HEK293 (cell line): ENCODE measurements at regions of chr12 and their contacts with region 1.

Region 1: DNA sequence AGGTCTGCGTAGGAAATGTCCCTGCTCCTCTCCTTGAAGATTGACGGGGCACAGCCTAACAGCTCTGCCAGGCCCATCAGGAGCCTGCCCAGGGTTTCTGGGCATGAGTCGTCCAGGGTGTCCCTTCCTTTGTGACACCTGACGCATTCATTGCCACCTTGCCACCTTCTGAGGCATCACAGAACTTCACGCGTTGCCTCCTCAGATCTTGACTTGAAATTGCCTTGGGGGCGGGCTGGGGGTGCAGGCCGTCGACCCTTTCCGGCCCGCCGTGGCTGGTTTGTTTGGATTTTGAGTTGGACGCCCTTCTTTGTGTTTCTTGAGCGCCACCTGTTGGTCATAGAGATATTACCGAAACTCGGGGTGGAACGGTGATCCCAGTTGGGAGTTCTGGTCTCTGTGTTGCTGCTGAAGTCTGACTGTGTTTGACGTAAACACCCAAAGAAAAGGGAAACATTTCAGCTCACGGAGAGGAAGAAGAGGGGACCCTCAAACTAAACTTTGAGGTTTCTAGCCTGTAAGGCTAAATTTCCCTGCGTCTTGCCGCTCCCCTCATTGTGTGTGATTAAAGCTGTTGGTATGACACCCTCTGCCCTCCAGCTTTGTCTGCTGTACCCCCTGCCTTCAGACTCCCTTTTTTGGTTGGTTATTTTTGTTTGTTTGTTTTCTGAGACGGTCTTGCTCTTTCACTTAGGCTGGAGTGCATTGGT is 44.6 kb downstream of the MLXIP start:
- H3K4me3 ChIP-seq: no peak overlapping the region
- H3K27ac ChIP-seq: no peak overlapping the region
- H3K4me1 ChIP-seq: no peaks in the 10 kb centered on the region
- CTCF ChIP-seq: peak; percentile 73

Region 2: DNA sequence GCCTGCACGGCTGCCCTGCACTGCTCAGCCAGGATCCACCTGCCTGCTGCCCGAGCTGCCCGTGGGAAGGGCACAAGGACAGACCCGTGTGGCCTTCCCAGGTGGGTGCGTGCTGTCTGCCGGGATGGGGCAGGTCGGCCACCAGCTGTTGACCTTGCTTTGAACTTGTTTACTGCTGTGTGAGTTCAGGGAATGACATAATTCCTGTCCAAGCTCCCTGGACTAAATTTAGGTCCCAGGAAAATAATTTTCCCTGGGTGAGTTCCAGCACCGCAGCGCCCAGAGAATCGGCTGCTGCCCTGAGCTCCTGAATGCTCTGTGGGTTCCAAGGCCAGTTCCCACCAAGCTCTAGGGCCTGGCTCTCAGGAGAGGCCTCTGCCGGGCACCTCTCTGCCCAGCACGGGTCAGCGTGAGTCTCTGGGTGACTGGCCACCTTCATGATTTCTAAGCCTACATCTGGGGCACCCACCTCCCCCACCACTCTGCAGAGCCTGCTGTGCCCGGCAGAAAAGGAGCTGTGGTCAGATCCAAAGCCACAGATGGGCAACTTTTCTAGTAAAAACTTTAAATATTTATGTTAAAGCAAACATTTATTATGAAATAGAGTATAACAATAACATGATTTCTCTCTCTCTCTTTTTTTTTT is 71.9 kb before region 1 on chr12:
- CTCF ChIA-PET with region 1: interaction called, 110 read pairs
- POLR2A ChIA-PET with region 1: interaction called, 5 read pairs
- H3K4me3 ChIP-seq: no peak overlapping the region
- H3K27ac ChIP-seq: no peak overlapping the region
- H3K4me1 ChIP-seq: no peaks in the 10 kb centered on the region; the same call in 1 of the 2 replicates
- CTCF ChIP-seq: no peak

Region 3: DNA sequence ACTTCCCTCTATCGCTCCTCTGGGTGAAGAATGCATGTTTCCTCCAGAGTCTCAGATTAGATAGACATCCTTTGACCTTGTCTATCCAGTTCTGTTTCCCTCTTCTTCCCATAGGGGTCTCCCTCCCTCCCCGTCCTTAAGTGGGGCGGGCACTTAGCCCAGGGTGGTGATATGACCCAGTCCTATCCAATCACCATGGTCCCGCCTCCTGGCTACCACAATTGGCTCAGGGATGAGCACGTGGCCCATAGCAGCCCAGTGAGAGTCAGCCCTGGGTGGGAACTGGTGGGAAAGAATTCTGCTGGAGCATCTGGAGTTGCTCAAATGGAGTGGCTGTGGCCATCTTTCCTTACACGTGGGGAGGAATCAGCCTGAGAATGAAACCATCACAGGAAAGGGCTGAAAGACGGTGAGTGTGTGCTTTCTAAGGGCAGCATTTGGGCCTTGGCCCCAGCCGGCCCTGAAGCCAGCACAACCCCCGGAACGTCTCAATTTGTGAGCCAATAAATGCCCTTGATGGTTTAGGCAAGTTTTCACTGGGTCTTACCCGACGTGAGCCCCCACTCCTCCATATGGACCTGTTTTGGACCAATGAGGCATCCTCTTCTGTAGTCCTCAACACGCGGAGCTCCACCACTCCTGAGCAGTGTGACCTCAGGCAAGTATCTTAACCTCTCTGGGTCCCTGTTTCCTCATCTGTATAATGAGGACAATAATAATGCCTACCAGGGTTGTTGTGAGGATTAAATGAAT is 59.0 kb before region 1 on chr12:
- CTCF ChIA-PET with region 1: interaction called, 31 read pairs
- POLR2A ChIA-PET with region 1: interaction called, 3 read pairs
- H3K4me3 ChIP-seq: no peak overlapping the region
- H3K27ac ChIP-seq: peak overlapping the region; percentile 89; the same call in 1 of the 2 replicates
- H3K4me1 ChIP-seq: peaks cover 22% of the 10 kb centered on the region
- CTCF ChIP-seq: peak; percentile 78

Region 4: DNA sequence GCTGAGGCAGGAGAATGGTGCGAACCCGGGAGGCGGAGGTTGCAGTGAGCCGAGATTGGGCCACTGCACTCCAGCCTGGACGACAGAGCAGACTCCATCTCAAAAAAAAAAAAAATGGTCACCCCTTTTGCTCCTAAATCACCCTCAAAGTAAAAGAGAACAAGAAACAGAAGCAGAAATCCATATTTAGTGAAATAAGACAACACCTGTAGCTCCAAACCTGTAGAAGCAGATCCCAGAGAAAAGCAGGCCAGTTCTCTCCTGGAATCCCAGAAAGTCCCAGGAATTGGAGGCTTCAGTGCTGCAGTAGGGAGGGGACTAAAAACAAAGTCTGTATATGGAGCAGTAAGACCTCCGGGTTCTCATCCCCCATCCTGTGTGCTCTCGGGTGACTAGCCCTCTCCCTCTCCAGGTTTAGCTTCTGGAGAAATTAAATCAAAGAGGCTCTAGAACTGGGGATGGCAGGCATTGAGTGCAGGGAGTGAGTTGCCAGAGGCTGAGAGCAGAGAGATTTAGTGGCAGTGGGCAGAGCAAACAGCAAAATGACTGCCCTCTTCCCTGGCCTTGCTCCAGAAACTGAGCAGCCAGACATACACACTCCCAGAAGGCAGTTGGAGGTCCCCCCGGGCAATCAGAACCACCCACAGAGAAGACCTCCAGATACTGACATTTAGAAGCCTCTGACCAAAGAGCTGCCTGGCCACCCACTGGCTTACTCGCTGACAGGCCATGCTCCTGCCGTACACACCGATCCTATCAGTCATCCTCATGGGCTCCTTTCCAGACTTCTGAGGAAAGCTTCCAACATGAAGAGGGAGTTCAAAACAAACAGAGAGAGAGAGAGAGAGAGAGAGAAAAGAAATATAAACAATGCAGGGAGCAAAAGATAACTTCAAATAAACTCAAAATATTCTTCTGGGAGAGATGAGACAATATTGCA is 50.9 kb before region 1 on chr12:
- CTCF ChIA-PET with region 1: interaction called, 12 read pairs
- POLR2A ChIA-PET with region 1: no interaction called
- H3K4me3 ChIP-seq: no peak overlapping the region; the same call in 1 of the 2 replicates
- H3K27ac ChIP-seq: peak overlapping the region; percentile 62
- H3K4me1 ChIP-seq: peaks cover 9% of the 10 kb centered on the region
- CTCF ChIP-seq: no peak

Region 5: GRCh38 chr12:122078141-122079032 is 44.8 kb before region 1 on chr12 and contains the start of gene MLXIP:
- CTCF ChIA-PET with region 1: interaction called, 16 read pairs
- POLR2A ChIA-PET with region 1: no interaction called
- H3K4me3 ChIP-seq: peak within 1 kb of the TSS; percentile 74
- H3K27ac ChIP-seq: peak within 1 kb of the TSS; percentile 85; the same call in 1 of the 2 replicates
- H3K4me1 ChIP-seq: peaks cover 16% of the 10 kb centered on the region
- CTCF ChIP-seq: no peak

Region 6: DNA sequence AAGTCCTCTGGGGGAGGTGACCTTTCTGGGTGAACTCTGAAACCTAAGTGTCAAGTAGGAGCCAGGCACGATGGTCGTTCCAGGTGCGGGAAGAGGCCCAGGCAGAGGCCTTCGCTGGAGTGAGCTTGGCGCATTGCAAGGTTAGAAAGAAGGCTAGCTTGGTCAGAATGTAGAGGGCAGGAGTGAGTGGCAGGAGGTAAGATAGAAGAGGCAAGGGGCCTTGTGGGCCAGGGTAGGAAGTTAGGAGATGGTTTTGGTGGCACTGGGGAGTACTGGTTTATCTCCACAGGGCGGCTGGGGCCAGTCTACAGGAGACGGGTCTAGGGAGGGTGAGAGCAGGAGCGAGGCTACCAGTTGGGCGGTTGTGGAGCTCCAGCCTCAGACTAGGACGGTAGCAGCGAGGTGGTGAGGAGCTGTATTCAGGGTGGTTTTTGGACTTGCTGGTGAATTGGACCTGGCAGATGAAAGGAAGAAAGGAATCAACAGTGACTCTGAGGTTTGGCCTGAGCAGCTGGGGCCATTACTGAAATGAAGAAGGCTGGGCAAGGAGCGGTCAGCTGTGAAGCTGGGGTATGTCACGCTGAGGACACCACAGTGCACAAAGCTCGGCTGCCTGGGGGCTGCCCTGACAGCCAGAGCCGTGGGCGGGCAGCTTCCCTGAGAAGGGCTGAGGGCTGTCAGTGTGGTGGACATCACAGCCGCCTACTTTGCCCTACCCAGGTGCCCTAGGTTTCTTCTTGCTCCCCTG is 35.6 kb before region 1 on chr12:
- CTCF ChIA-PET with region 1: interaction called, 11 read pairs
- POLR2A ChIA-PET with region 1: no interaction called
- H3K4me3 ChIP-seq: no peak overlapping the region
- H3K27ac ChIP-seq: no peak overlapping the region
- H3K4me1 ChIP-seq: peaks cover 2% of the 10 kb centered on the region; the same call in 1 of the 2 replicates
- CTCF ChIP-seq: no peak